ENCODE measurements at regions of chr3 and their contacts with region 1.

Region 1: DNA sequence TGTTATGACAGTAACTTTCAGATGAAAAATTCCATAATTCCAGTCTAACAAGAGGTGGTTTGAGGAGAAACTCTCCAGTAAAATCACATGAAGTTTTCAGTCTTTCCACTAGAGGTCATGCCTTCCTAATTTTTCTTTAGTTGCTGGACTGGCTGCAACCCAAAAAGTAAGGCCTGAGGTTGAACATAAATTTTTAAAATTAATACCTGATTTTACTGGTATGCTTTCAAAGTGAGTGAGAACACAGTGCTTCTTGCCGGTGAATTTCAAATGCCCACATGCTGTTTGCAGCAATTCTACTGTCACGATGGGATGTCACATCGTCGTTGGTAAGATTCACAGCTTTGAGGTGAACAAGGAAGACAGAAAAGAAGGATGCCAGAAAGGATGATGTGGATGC is 89.0 kb upstream of the FGF12 start:
- DNase-seq: no peak
- H3K4me3 ChIP-seq: no peak overlapping the region
- H3K27ac ChIP-seq: no peak overlapping the region
- H3K4me1 ChIP-seq: peaks cover 2 to 9% (median 3%) of the 10 kb centered on the region in 4 experiments; a peak in 5 of 7 replicates
- H3K27me3 ChIP-seq: no peaks in the 10 kb centered on the region
- CTCF ChIP-seq: peak in 2 of 3 experiments; percentile 49 to 60; a peak in 3 of 4 replicates
- EP300 ChIP-seq: no peak
- POLR2A ChIP-seq: no peak
- RAD21 ChIP-seq: peak; percentile 84 to 87

Region 2: DNA sequence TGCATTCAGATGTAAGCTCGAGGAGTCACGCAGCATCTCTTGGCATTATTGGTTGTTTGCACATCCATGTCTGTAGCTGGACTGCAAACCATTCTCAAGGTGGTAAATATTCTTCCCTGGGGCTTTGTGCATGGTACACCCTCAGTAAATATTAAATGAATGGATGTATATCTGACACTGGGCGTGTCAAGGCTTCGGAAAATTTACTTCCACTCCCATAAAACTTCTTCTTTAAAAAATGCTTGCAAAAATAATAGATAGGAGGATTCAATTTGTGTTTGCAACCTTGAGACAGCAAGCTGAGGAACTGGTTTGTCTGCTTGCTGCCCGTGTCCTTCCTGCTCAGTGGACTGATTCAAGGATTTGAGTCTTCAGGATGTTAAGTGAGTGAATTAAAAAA is 542.8 kb before region 1 on chr3:
- CTCF ChIA-PET with region 1: no interaction called
- POLR2A ChIA-PET with region 1: no interaction called
- DNase-seq: no peak
- H3K4me3 ChIP-seq: no peak overlapping the region
- H3K27ac ChIP-seq: no peak overlapping the region
- H3K4me1 ChIP-seq: peaks cover 0 to 5% (median 3%) of the 10 kb centered on the region in 4 experiments; a peak in 5 of 7 replicates
- H3K27me3 ChIP-seq: no peaks in the 10 kb centered on the region
- CTCF ChIP-seq: no peak
- EP300 ChIP-seq: no peak
- POLR2A ChIP-seq: no peak
- RAD21 ChIP-seq: no peak

Region 3: GRCh38 chr3:192892981-192893700 is 76.8 kb after region 1 on chr3:
- CTCF ChIA-PET with region 1: interaction called, 17 read pairs
- POLR2A ChIA-PET with region 1: no interaction called
- DNase-seq: no peak
- H3K4me3 ChIP-seq: peak overlapping the region in 1 of 4 experiments; percentile 20; a peak in 1 of 8 replicates
- H3K27ac ChIP-seq: peak overlapping the region; percentile 6; the same call in 1 of the 2 replicates
- H3K4me1 ChIP-seq: peaks cover 0 to 29% (median 25%) of the 10 kb centered on the region in 4 experiments; a peak in 6 of 7 replicates
- H3K27me3 ChIP-seq: no peaks in the 10 kb centered on the region
- CTCF ChIP-seq: no peak
- EP300 ChIP-seq: no peak
- POLR2A ChIP-seq: no peak
- RAD21 ChIP-seq: no peak

Region 4: DNA sequence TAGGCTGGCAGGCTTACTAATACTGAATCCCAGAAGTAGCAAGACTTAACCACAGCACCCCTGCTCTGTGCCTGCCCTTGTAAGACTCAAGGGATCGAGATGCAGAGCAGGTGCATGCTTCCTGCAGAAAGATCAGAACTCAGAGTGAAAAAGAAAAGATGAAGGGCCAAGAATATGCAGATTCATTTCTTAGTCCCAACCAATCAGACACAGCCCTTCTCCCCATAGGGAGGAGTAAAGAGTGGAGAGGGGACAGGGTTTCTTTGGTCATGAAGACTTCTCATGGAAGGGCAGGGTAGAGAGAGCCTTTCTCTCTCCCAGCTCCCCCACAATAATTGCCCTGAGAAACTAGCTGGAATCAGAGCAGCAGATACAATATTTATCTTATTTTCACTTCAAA is 206.9 kb after region 1 on chr3:
- CTCF ChIA-PET with region 1: interaction called, 12 read pairs
- POLR2A ChIA-PET with region 1: no interaction called
- DNase-seq: no peak
- H3K4me3 ChIP-seq: no peak overlapping the region
- H3K27ac ChIP-seq: no peak overlapping the region
- H3K4me1 ChIP-seq: no peaks in the 10 kb centered on the region; a peak in 1 of 7 replicates
- H3K27me3 ChIP-seq: no peaks in the 10 kb centered on the region
- CTCF ChIP-seq: no peak
- EP300 ChIP-seq: no peak
- POLR2A ChIP-seq: no peak
- RAD21 ChIP-seq: no peak

Region 5: GRCh38 chr3:193052354-193053045 is 236.1 kb after region 1 on chr3:
- CTCF ChIA-PET with region 1: interaction called, 26 read pairs
- POLR2A ChIA-PET with region 1: no interaction called
- DNase-seq: no peak
- H3K4me3 ChIP-seq: no peak overlapping the region
- H3K27ac ChIP-seq: no peak overlapping the region; the same call in 1 of the 2 replicates
- H3K4me1 ChIP-seq: no peaks in the 10 kb centered on the region; a peak in 1 of 7 replicates
- H3K27me3 ChIP-seq: no peaks in the 10 kb centered on the region
- CTCF ChIP-seq: no peak
- EP300 ChIP-seq: no peak
- POLR2A ChIP-seq: no peak
- RAD21 ChIP-seq: no peak

Region 6: GRCh38 chr3:193457526-193457925 is 641.2 kb after region 1 on chr3:
- CTCF ChIA-PET with region 1: interaction called, 11 read pairs
- POLR2A ChIA-PET with region 1: no interaction called
- DNase-seq: no peak
- H3K4me3 ChIP-seq: no peak overlapping the region
- H3K27ac ChIP-seq: no peak overlapping the region
- H3K4me1 ChIP-seq: no peaks in the 10 kb centered on the region
- H3K27me3 ChIP-seq: no peaks in the 10 kb centered on the region
- CTCF ChIP-seq: no peak
- EP300 ChIP-seq: no peak
- POLR2A ChIP-seq: no peak
- RAD21 ChIP-seq: no peak

Measured in H1 (cell line).